Dendritic cell treated with granulocyte-macrophage colony-stimulating factor and Interleukin-4, amounts not matched to agents 40 ng/mL and 50 ng/mL, for 4 days (primary cell): ENCODE measurements at regions of chr22 and their contacts with region 1.

Region 1: DNA sequence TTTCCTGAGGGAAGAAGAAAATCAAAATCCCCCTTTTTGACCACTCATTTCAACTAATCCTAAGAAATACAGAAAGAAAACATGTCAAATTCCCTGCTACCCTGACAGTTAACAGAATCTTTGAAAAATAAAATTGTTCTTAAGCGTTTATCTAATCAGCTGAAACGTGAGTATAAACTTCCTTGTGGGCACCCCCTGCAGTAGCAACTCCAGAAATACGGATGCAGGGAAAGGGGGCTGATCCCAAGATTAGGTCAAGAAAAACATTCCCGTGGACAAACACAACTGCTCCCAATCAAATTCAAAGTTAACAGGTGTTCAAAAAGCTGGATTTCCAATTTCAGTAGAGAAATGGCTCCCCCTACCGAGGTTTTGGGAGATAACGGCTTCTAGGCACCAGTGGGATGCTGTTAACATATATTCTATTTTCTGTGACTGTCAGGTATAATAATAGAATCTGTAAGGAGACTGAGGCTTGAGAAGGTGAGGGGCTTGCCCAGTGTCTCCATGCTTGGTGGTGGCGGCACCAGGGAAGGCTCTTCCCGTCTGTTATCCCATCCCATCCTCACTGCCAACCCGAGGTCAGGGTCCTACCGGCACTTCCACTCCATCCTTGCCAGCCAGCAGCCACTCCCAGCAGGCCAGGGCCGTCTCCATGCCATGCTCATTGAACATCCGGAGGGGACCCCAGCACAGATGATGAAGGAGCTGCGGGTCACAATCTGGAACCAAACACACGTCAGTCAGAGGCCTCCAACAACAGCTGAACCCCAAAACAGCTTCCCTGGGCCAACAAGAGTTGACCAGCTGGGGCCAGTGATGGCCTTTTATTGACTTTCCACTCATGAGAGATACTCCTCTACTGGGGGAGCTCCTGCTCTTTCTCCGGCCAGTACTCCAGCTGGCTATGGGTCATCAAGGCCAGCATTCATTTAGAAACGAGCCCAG is 32.0 kb upstream of the SERPIND1 start:
- H3K4me3 Mint-ChIP-seq: no peak overlapping the region
- H3K27ac Mint-ChIP-seq: no peak overlapping the region
- H3K4me1 Mint-ChIP-seq: peaks cover 24% of the 10 kb centered on the region
- H3K27me3 Mint-ChIP-seq: no peaks in the 10 kb centered on the region

Region 2: DNA sequence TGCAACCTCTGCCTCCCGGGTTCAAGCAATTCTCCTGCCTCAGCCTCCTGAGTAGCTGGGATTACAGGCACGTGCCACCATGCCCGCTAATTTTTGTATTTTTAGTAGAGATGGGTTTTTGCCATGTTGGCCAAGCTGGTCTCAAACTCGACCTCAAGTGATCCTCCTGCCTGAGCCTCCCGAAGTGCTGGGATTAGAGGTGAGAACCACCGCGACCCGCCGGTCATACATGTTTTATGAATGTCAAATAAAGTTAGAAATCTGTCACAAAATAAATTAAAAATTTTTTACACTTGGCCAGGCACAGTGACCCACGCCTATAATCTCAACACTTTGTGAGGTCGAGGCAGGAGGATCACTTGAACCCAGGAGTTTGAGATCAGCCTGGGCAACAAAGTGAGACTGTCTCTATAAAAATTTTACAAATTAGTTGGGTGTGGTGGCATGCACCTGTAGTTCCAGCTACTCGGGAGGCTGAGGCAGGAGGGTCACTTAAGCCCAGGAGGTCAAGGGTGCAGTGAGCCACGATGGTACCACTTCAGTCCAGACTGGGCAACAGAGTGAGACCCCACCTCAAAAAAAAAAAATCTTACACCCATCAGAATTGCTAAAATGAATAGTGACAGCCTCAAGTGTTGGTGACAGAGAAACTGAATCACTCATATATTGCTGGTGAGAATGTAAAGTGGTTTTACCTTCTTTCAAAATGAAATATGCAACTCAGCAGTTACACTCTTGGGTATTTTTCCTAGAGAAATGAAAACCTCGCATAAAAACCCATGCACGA is 179.3 kb before region 1 on chr22:
- intact Hi-C with region 1: loop called (anchors 5 kb)
- H3K4me3 Mint-ChIP-seq: no peak overlapping the region
- H3K27ac Mint-ChIP-seq: no peak overlapping the region
- H3K4me1 Mint-ChIP-seq: peaks cover 2% of the 10 kb centered on the region
- H3K27me3 Mint-ChIP-seq: no peaks in the 10 kb centered on the region

Region 3: DNA sequence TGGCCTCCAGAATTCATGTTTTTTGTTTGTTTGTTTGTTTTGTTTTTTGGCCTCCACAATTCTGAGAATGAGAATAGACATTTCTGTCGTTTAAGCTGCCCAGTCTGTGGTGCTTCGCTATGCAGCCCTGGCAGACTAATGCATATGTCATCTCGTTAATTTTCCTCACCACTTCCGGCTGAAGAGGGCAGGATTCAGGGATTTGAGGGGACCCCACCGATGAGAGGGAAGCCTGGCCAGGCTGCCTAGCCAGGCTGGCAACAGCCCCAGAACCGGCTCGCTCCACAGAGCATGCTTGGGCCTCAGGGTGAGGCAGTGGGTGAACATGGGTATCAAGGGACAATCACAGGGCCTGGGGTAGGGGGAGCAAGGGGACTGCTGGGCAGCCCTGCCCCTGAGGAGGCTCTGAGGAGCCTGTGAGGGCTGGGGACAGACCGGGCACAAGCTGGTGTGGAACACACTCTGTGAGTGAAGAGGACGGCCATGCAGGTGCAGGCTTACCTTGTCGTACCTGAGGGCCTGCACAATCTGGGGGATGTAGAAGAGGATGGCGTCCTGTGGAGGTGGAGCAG is 15.8 kb before region 1 on chr22:
- intact Hi-C with region 1: no loop called
- H3K4me3 Mint-ChIP-seq: no peak overlapping the region
- H3K27ac Mint-ChIP-seq: no peak overlapping the region
- H3K4me1 Mint-ChIP-seq: no peaks in the 10 kb centered on the region
- H3K27me3 Mint-ChIP-seq: no peaks in the 10 kb centered on the region

Region 4: GRCh38 chr22:20829491-20830134 is 87.7 kb after region 1 on chr22:
- intact Hi-C with region 1: no loop called
- H3K4me3 Mint-ChIP-seq: no peak overlapping the region
- H3K27ac Mint-ChIP-seq: peak overlapping the region; percentile 1
- H3K4me1 Mint-ChIP-seq: peaks cover 9% of the 10 kb centered on the region
- H3K27me3 Mint-ChIP-seq: no peaks in the 10 kb centered on the region

Region 5: GRCh38 chr22:20840646-20841371 is 98.9 kb after region 1 on chr22:
- intact Hi-C with region 1: no loop called
- H3K4me3 Mint-ChIP-seq: no peak overlapping the region
- H3K27ac Mint-ChIP-seq: no peak overlapping the region
- H3K4me1 Mint-ChIP-seq: peaks cover 29% of the 10 kb centered on the region
- H3K27me3 Mint-ChIP-seq: no peaks in the 10 kb centered on the region